HepG2 (cell line): ENCODE measurements at regions of chr14 and their contacts with region 1.

Region 1: DNA sequence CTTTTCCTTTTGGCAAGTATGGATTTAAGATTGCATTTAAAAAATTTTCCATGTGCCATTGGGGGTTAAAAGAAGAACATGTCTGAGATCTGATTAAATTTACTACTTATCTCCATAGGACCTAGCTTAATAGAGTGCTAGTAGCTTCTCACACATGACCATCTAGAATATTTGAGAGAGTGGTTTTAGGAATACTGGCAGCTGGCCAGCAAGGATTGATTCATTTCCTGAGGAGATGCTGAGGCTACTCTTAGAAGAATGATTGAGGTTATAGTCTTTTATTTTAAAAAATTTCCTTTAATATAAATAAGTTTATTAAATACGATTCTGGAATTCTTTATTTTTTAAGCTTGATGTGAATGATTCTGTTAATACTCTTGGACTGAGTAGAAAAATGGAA is 56.2 kb downstream of the MIPOL1 start:
- DNase-seq: no peak
- ATAC-seq: no peak
- H3K4me3 ChIP-seq: no peak overlapping the region
- H3K27ac ChIP-seq: no peak overlapping the region
- H3K4me1 ChIP-seq: peaks cover 29% of the 10 kb centered on the region
- H3K27me3 ChIP-seq: no peaks in the 10 kb centered on the region
- CTCF ChIP-seq: no peak
- EP300 ChIP-seq: no peak
- POLR2A ChIP-seq: no peak
- RAD21 ChIP-seq: no peak

Region 2: DNA sequence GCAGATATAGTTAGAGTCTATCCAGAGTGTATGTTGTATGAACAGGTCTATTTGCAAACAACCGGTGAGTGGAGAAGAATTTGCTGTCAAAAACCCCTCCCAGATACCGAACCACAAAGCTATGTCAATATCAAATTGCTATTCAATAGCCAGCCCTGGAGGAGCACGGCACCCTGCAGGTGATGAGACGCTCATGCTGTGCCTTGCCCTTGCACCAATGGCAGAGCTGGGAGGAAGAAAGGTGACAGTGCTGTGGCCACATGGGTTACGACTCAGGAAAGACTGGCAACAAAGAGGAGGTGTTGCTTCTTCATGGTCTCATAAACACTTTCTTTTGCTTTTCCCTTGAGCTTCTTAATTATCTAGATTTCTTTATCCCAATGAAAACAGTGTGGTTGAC is 536.5 kb before region 1 on chr14:
- CTCF ChIA-PET with region 1: no interaction called
- POLR2A ChIA-PET with region 1: no interaction called
- in situ Hi-C with region 1: no loop called
- intact Hi-C with region 1: no loop called
- DNase-seq: peak; percentile 21
- ATAC-seq: peak; percentile 41
- H3K4me3 ChIP-seq: no peak overlapping the region
- H3K27ac ChIP-seq: no peak overlapping the region
- H3K4me1 ChIP-seq: peaks cover 10% of the 10 kb centered on the region; the same call in 1 of the 2 replicates
- H3K27me3 ChIP-seq: no peaks in the 10 kb centered on the region
- CTCF ChIP-seq: no peak
- EP300 ChIP-seq: no peak
- POLR2A ChIP-seq: no peak
- RAD21 ChIP-seq: no peak

Region 3: GRCh38 chr14:37036669-37037341 is 217.1 kb before region 1 on chr14:
- CTCF ChIA-PET with region 1: no interaction called
- POLR2A ChIA-PET with region 1: no interaction called
- in situ Hi-C with region 1: no loop called
- intact Hi-C with region 1: no loop called
- DNase-seq: peak; percentile 33
- ATAC-seq: peak; percentile 51
- H3K4me3 ChIP-seq: no peak overlapping the region
- H3K27ac ChIP-seq: no peak overlapping the region
- H3K4me1 ChIP-seq: peaks cover 27% of the 10 kb centered on the region
- H3K27me3 ChIP-seq: no peaks in the 10 kb centered on the region
- CTCF ChIP-seq: no peak
- EP300 ChIP-seq: no peak
- POLR2A ChIP-seq: no peak
- RAD21 ChIP-seq: no peak

Region 4: DNA sequence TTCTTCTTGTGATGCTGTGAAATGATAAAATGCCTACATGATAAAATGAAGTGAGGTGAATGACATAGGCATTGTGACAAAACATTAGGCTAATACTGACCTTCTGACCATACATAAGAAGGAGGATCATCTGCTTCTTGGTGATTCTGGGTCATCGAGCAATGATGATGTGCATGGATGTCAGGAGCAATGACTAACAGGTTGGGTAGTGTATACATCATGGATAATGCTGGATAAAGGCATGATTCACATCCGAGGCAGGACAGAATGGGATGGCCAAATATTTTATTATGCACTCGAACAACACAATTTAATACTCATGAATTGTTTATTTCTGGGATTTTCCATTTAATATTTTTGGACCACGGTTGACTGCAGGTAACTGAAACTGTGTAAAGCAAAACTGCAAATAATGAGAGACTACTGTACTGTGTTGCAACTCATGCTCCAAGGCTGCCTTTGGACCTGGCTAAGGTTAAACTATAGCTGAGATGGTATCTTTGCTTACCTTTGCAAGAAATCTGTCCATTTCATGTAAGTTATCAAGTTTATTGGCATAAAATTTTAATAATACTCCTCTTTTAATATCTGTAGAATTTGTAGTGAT is 73.9 kb before region 1 on chr14:
- CTCF ChIA-PET with region 1: no interaction called
- POLR2A ChIA-PET with region 1: no interaction called
- in situ Hi-C with region 1: no loop called
- intact Hi-C with region 1: no loop called
- DNase-seq: no peak
- ATAC-seq: peak; percentile 90
- H3K4me3 ChIP-seq: no peak overlapping the region
- H3K27ac ChIP-seq: no peak overlapping the region
- H3K4me1 ChIP-seq: peaks cover 22% of the 10 kb centered on the region
- H3K27me3 ChIP-seq: peaks cover 0 to 2% of the 10 kb centered on the region in 2 experiments; a peak in 1 of 5 replicates
- CTCF ChIP-seq: no peak
- EP300 ChIP-seq: no peak
- POLR2A ChIP-seq: no peak
- RAD21 ChIP-seq: no peak

Region 5: GRCh38 chr14:37329189-37330001 is 75.5 kb after region 1 on chr14:
- CTCF ChIA-PET with region 1: no interaction called
- POLR2A ChIA-PET with region 1: no interaction called
- in situ Hi-C with region 1: no loop called
- intact Hi-C with region 1: loop called (anchors 2 kb)
- DNase-seq: peak; percentile 92
- ATAC-seq: peak; percentile 98
- H3K4me3 ChIP-seq: peak overlapping the region in 2 of 3 experiments; percentile 23 to 26; a peak in 3 of 6 replicates
- H3K27ac ChIP-seq: peak overlapping the region; percentile 57
- H3K4me1 ChIP-seq: peaks cover 30% of the 10 kb centered on the region
- H3K27me3 ChIP-seq: no peaks in the 10 kb centered on the region
- CTCF ChIP-seq: no peak
- EP300 ChIP-seq: peak; percentile 41 to 91; a peak in 3 of 4 replicates
- POLR2A ChIP-seq: no peak
- RAD21 ChIP-seq: no peak

Region 6: GRCh38 chr14:37466623-37467088 is 212.8 kb after region 1 on chr14:
- CTCF ChIA-PET with region 1: no interaction called
- POLR2A ChIA-PET with region 1: no interaction called
- in situ Hi-C with region 1: no loop called
- intact Hi-C with region 1: loop called (anchors 1 kb)
- DNase-seq: peak; percentile 100
- ATAC-seq: peak; percentile 97
- H3K4me3 ChIP-seq: peak overlapping the region in 1 of 3 experiments; percentile 12; a peak in 2 of 6 replicates
- H3K27ac ChIP-seq: peak overlapping the region; percentile 81
- H3K4me1 ChIP-seq: peaks cover 46% of the 10 kb centered on the region
- H3K27me3 ChIP-seq: no peaks in the 10 kb centered on the region
- CTCF ChIP-seq: no peak
- EP300 ChIP-seq: peak; percentile 100
- POLR2A ChIP-seq: no peak
- RAD21 ChIP-seq: peak; percentile 67